Ascending aorta (tissue), 2 donors: ENCODE measurements at regions of chr3 and their contacts with region 1.

Region 1: DNA sequence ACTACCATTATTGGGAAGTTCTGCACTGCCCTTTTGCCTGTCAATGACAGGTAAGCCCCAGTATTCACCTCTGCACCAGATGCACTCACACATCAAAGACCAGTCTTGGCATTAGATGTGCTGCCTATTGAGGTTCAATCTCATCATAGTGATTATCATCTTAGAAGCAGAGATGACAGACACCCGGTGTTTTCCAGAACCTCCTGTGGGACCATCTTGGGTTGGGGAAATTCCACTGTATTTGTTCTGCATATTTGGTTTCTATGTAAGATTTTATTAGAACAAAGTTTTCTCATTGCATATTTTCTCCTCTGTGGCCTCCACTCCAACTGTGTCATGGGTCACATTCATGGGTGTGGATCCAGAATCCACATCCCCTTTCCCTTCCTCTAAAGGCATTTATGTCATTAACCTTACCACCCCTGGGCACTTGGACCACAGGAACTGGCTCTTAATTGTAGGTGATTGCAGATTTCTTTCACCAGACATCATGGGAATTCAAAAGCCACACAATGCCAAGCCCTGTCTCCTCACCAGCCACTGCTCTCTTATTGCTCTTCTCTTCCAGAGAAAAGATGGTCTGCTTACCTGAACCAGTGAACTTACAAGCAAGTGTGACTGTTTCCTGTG is 31.2 kb downstream of the PLA1A start:
- DNase-seq: peak in 1 of 2 donors; percentile 63
- H3K4me3 ChIP-seq: no peak overlapping the region
- H3K27ac ChIP-seq: peak overlapping the region; percentile 74 to 85
- H3K4me1 ChIP-seq: peaks cover 4 to 54% of the 10 kb centered on the region in 2 donors
- H3K27me3 ChIP-seq: no peaks in the 10 kb centered on the region
- CTCF ChIP-seq: no peak

Region 2: GRCh38 chr3:119579366-119580165 is 49.4 kb before region 1 on chr3 and contains the start of gene ADPRH:
- intact Hi-C with region 1: loop called (anchors 5 kb)
- DNase-seq: peak in 1 of 2 donors; percentile 86
- H3K4me3 ChIP-seq: peak within 1 kb of the TSS; percentile 55 to 88
- H3K27ac ChIP-seq: peak within 1 kb of the TSS; percentile 92 to 93
- H3K4me1 ChIP-seq: peaks cover 0 to 4% of the 10 kb centered on the region in 2 donors
- H3K27me3 ChIP-seq: no peaks in the 10 kb centered on the region
- CTCF ChIP-seq: no peak
- total RNA-seq, gene ADPRH: 32.1 TPM